ENCODE measurements at regions of chr10 and their contacts with region 1.

Region 1: GRCh38 chr10:2927958-2928840 is 139.1 kb upstream of the PFKP start:
- DNase-seq: peak in 8 of 10 donors; percentile 48 to 94 (median 72)

Region 2: DNA sequence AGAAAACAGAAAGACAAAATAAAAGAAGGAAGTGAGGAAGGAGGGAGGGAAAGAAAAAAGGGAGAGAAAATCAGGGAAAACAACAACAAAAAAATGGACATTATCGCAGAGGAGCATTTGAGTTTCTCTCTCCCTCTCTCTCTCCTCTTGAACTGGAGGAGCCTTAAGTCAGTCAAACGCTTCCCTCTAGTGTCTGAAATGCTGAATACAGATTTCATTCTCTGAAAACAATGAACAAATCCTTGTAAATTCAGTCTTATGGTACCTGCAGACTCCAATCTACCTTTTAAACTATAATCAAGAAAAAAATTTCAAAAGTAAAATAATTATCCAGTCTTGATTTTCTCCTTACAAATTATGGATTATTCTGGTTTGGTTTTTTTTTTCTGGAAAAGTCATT is 49.9 kb after region 1 on chr10:
- intact Hi-C with region 1: loop called (anchors 5 kb)
- DNase-seq: no peak

Region 3: GRCh38 chr10:3043512-3044368 is 115.5 kb after region 1 on chr10:
- intact Hi-C with region 1: loop called (anchors 10 kb)
- DNase-seq: peak; percentile 38 to 96 (median 72)

Measured in posterior cingulate gyrus (tissue), 11 donors.